PC-3 (cell line): ENCODE measurements at regions of chr5 and their contacts with region 1.

Region 1: GRCh38 chr5:134465816-134466240 is 54.1 kb upstream of the CDKN2AIPNL start:
- DNase-seq: peak; percentile 86
- ATAC-seq: peak; percentile 76
- H3K4me3 ChIP-seq: peak overlapping the region; percentile 68
- H3K27ac ChIP-seq: peak overlapping the region; percentile 99
- H3K4me1 ChIP-seq: peaks cover 13% of the 10 kb centered on the region; the same call in 1 of the 2 replicates
- H3K27me3 ChIP-seq: no peaks in the 10 kb centered on the region
- CTCF ChIP-seq: no peak

Region 2: GRCh38 chr5:134411546-134412266 is 54.1 kb before region 1 on chr5 and contains the start of gene CDKN2AIPNL:
- CTCF ChIA-PET with region 1: no interaction called
- POLR2A ChIA-PET with region 1: interaction called, 3 read pairs
- intact Hi-C with region 1: loop called (anchors 5 kb)
- DNase-seq: peak; percentile 80
- ATAC-seq: peak; percentile 99
- H3K4me3 ChIP-seq: peak within 1 kb of the TSS; percentile 96
- H3K27ac ChIP-seq: peak within 1 kb of the TSS; percentile 16; the same call in 1 of the 2 replicates
- H3K4me1 ChIP-seq: peaks cover 24% of the 10 kb centered on the region; the same call in 1 of the 2 replicates
- H3K27me3 ChIP-seq: no peaks in the 10 kb centered on the region
- CTCF ChIP-seq: peak; percentile 68
- total RNA-seq, gene CDKN2AIPNL: 29.7 and 38.2 TPM in 2 replicates

Region 3: GRCh38 chr5:134430001-134430569 is 35.7 kb before region 1 on chr5:
- CTCF ChIA-PET with region 1: no interaction called
- POLR2A ChIA-PET with region 1: no interaction called
- intact Hi-C with region 1: no loop called
- DNase-seq: no peak
- ATAC-seq: no peak
- H3K4me3 ChIP-seq: no peak overlapping the region
- H3K27ac ChIP-seq: no peak overlapping the region
- H3K4me1 ChIP-seq: peaks cover 2% of the 10 kb centered on the region
- H3K27me3 ChIP-seq: no peaks in the 10 kb centered on the region
- CTCF ChIP-seq: no peak

Region 4: GRCh38 chr5:134477462-134478250 is 11.8 kb after region 1 on chr5:
- CTCF ChIA-PET with region 1: no interaction called
- POLR2A ChIA-PET with region 1: interaction called, 23 read pairs
- intact Hi-C with region 1: no loop called
- DNase-seq: peak; percentile 7
- ATAC-seq: no peak
- H3K4me3 ChIP-seq: no peak overlapping the region
- H3K27ac ChIP-seq: no peak overlapping the region
- H3K4me1 ChIP-seq: no peaks in the 10 kb centered on the region
- H3K27me3 ChIP-seq: no peaks in the 10 kb centered on the region
- CTCF ChIP-seq: no peak

Region 5: GRCh38 chr5:134506054-134507039 is 40.5 kb after region 1 on chr5:
- CTCF ChIA-PET with region 1: interaction called, 3 read pairs
- POLR2A ChIA-PET with region 1: interaction called, 5 read pairs
- intact Hi-C with region 1: loop called (anchors 5 kb)
- DNase-seq: peak; percentile 86
- ATAC-seq: peak; percentile 79
- H3K4me3 ChIP-seq: peak overlapping the region; percentile 39
- H3K27ac ChIP-seq: peak overlapping the region; percentile 64
- H3K4me1 ChIP-seq: peaks cover 89% of the 10 kb centered on the region
- H3K27me3 ChIP-seq: no peaks in the 10 kb centered on the region
- CTCF ChIP-seq: no peak

Region 6: GRCh38 chr5:134552301-134552700 is 86.5 kb after region 1 on chr5:
- CTCF ChIA-PET with region 1: no interaction called
- POLR2A ChIA-PET with region 1: interaction called, 15 read pairs
- intact Hi-C with region 1: no loop called
- DNase-seq: peak; percentile 84
- ATAC-seq: peak; percentile 34
- H3K4me3 ChIP-seq: no peak overlapping the region
- H3K27ac ChIP-seq: peak overlapping the region; percentile 85
- H3K4me1 ChIP-seq: peaks cover 71% of the 10 kb centered on the region
- H3K27me3 ChIP-seq: no peaks in the 10 kb centered on the region
- CTCF ChIP-seq: no peak